ENCODE measurements at regions of chrX and their contacts with region 1.

Region 1: DNA sequence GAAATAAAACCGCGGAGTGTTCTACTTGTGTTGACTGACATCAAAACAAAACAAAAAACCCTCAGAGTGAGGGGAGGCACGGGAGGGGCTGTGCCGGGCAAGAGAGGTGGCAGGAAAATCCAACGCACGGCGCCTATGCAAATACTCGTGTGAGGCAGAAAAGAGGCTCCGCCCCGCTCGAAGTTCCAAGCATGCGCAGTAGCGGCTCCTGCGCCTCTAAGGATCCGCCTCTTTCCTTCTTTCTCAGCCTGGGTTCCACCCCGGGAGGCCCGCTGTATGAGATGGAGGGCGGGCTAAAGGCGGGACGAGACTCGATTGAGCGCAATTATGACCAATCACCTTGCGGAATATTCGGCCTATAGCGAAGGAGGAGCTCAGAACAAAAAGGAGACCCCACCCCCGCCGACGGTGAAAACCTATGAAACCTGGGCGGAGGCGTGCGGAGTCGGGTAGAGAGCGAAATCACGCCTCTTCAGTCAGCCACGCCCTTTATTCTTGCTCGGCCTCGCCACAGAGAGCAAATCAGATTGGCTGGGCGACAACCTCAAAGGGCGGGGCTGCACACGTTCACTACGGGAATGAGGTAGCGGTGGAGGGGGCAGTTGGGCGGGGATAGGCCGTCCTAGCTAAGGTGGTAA is 720 bp upstream of the CDK16 start:
- DNase-seq: peak; percentile 89 to 99 (median 96)
- ATAC-seq: peak; percentile 81
- H3K4me3 ChIP-seq: peak overlapping the region; percentile 81
- H3K4me3 Mint-ChIP-seq: peak overlapping the region; percentile 98
- H3K27ac ChIP-seq: peak overlapping the region; percentile 89 to 99
- H3K27ac Mint-ChIP-seq: peak overlapping the region; percentile 98
- H3K4me1 ChIP-seq: peaks cover 30% of the 10 kb centered on the region
- H3K4me1 Mint-ChIP-seq: peaks cover 38% of the 10 kb centered on the region
- H3K27me3 ChIP-seq: no peaks in the 10 kb centered on the region
- H3K27me3 Mint-ChIP-seq: no peaks in the 10 kb centered on the region
- CTCF ChIP-seq: no peak

Region 2: DNA sequence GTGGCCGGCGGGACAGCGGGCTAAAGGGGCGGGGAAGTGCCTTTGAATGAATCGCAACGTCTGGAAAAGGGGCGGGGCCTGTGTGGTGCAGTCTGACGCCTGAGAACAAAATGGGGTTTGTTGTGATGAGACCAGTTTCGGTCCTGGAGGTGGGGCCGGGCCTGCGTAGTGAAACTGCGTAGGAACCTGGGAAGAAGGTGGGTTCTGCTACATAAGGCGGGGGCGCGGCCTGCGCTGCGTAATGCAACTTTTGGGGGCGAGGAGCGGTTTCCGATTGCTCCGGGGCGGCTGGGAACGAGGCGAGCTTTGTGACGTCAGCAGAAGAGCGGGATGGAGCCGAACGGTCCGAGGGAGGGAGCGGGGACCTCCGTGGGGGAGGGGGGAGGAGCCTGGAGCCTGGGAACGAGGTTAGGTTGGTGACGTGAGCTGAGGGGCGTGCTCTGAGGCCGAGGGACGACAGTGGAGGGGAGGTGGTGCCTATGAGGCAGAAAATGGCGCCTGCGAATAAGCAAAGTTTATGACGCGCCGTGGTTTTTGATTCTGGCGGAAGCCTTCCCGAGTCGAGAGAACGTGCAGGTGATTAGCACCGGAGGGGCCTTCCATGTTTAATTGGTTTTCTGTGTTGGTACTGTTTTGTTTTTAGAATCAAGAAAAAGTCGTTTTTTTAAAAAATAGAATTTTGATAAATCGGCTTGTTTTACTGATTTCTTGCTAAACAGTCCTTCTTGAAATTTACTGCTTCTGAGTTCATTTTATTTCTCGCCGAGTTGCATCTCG is 15.8 kb after region 1 on chrX:
- CTCF ChIA-PET with region 1: no interaction called
- POLR2A ChIA-PET with region 1: interaction called, 137 read pairs
- intact Hi-C with region 1: loop called (anchors 1 kb)
- DNase-seq: peak; percentile 87 to 98 (median 92)
- ATAC-seq: peak; percentile 88
- H3K4me3 ChIP-seq: peak overlapping the region; percentile 91
- H3K4me3 Mint-ChIP-seq: peak overlapping the region; percentile 91
- H3K27ac ChIP-seq: peak overlapping the region; percentile 95 to 98
- H3K27ac Mint-ChIP-seq: peak overlapping the region; percentile 93
- H3K4me1 ChIP-seq: peaks cover 10% of the 10 kb centered on the region
- H3K4me1 Mint-ChIP-seq: peaks cover 31% of the 10 kb centered on the region
- H3K27me3 ChIP-seq: no peaks in the 10 kb centered on the region
- H3K27me3 Mint-ChIP-seq: no peaks in the 10 kb centered on the region
- CTCF ChIP-seq: no peak

Region 3: DNA sequence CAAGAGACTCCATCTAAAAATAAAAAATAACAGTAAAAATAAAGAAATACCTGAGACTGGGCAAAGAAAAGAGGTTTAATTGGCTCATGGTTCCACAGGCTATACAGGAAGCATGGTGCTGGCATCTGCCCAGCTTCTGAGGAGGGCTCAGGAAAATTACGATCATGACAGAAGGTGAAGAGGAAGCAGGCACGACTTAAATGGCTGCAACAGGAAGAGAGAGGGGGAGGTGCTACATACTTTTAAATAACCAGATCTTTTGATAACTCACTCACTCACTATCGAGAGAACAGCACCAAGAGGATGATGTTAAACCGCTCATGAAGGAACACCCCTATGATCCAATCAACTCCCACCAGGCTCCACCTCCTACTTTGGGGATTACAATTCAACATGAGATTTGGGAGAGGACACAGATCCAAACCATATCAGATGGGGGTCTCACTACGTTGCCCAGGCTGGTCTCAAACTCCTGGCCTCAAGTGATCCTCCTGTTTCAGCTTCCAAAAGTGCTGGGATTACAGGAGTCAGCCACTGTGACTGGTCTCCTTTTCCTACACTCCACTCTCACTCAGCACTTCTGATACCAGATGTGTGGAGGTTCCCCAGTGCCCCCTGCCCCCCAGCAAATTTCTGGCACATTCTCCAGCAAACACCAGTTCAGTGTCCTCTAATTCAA is 140.8 kb after region 1 on chrX:
- CTCF ChIA-PET with region 1: no interaction called
- POLR2A ChIA-PET with region 1: interaction called, 5 read pairs
- intact Hi-C with region 1: loop called in 1 of 2 experiments (anchors 5 kb)
- DNase-seq: peak in 11 of 14 experiments; percentile 2 to 74 (median 23)
- ATAC-seq: peak; percentile 64
- H3K4me3 ChIP-seq: no peak overlapping the region
- H3K4me3 Mint-ChIP-seq: peak overlapping the region; percentile 45
- H3K27ac ChIP-seq: no peak overlapping the region
- H3K27ac Mint-ChIP-seq: peak overlapping the region; percentile 83
- H3K4me1 ChIP-seq: peaks cover 27% of the 10 kb centered on the region
- H3K4me1 Mint-ChIP-seq: peaks cover 28% of the 10 kb centered on the region
- H3K27me3 ChIP-seq: no peaks in the 10 kb centered on the region
- H3K27me3 Mint-ChIP-seq: no peaks in the 10 kb centered on the region
- CTCF ChIP-seq: no peak